HepG2 (cell line): ENCODE measurements at regions of chr18 and their contacts with region 1.

Region 1: DNA sequence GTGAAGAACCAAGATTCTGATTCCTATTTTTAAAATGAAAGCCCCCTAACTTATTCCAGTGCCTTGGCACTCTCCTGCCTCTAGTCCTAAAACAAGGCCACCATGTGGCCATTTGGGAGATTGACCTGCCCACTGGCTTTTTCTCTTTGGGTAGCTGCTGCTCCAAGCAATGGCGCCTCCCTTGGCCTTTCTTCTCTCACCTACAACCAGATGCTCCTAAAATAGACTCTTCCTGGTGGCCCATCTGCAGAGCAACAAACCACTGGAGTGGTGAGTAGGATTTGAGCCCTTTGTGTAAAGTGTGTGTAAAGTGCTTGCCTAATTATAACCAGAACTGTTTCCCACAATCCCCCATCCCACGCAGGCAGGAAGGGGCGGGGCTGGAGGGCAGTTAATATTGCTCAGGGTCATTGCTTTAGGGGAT is 114.2 kb downstream of the FHOD3 start:
- DNase-seq: peak; percentile 21
- ATAC-seq: peak; percentile 77
- H3K4me3 ChIP-seq: no peak overlapping the region
- H3K27ac ChIP-seq: no peak overlapping the region
- H3K4me1 ChIP-seq: no peaks in the 10 kb centered on the region
- H3K27me3 ChIP-seq: no peaks in the 10 kb centered on the region
- CTCF ChIP-seq: peak; percentile 27
- EP300 ChIP-seq: no peak
- POLR2A ChIP-seq: no peak
- RAD21 ChIP-seq: no peak

Region 2: DNA sequence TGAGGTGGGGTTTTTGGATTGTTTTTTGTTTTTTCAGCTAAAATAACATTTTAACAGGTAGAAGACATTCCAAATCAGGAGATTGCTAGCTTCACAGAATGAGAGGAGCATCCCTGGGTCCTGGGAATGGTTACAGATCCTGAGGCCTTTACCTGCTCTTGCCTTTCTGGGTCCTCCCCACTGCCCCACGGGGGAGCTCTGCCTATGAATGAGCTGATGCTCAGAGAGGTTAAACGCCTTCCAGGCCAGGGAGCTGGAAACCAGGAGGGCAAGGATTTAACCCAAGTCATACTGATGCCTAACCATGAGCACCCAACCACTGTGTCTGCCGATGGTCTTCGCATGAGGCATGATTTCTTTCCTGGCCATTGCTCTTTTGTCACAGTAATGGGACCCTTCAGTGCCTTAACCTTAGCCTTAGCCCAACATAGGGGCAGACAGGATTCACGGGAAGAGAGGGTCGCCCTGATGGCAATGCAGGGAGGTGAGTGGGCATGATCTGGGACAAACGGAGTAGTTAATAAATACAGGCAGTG is 208.3 kb before region 1 on chr18:
- CTCF ChIA-PET with region 1: no interaction called
- POLR2A ChIA-PET with region 1: no interaction called
- in situ Hi-C with region 1: no loop called
- intact Hi-C with region 1: no loop called
- DNase-seq: no peak
- ATAC-seq: no peak
- H3K4me3 ChIP-seq: no peak overlapping the region
- H3K27ac ChIP-seq: no peak overlapping the region
- H3K4me1 ChIP-seq: peaks cover 6% of the 10 kb centered on the region; the same call in 1 of the 2 replicates
- H3K27me3 ChIP-seq: no peaks in the 10 kb centered on the region
- CTCF ChIP-seq: no peak
- EP300 ChIP-seq: no peak
- POLR2A ChIP-seq: no peak
- RAD21 ChIP-seq: no peak

Region 3: DNA sequence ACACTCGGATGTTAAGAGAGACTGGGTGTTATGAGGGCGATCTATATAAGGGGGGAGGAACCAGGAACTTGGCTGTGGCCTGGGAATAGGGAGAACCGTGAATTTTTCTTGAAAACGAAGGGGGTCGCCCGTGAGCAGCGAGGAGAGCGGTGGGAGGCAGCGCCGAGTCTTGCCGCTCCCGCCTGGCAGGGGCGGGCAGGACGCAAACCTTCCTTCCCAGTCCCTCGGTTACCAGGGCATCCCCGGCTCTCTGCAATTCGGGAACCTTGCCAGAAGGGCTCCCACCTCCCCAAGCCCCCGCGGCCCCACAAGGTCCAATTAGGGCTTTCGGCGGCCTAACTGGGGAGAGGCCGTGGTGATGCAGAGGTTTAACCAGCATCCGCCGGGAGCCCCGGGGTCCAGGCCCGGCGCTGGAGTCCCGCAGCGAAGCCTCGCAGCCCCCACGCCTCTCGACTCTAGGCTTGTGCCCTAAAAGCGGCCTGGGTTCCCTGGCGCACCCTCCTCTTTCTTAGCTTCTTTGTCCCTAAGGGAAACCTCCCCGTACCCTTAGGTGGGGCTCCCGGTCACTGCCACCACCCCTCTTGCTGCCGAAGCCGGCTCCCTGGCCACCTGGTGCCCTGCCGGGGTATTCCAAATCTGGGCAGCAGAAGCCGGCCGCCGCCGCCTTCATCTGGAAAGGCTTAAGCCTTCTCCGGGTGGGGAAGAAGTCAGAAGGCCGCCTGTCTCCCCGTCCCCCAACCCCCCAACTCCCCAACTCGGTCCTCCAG is 114.9 kb before region 1 on chr18:
- CTCF ChIA-PET with region 1: no interaction called
- POLR2A ChIA-PET with region 1: no interaction called
- in situ Hi-C with region 1: no loop called
- intact Hi-C with region 1: loop called (anchors 2 kb)
- DNase-seq: peak; percentile 32
- ATAC-seq: peak; percentile 86
- H3K4me3 ChIP-seq: peak overlapping the region; percentile 47 to 67 (median 52); a peak in 5 of 6 replicates
- H3K27ac ChIP-seq: no peak overlapping the region
- H3K4me1 ChIP-seq: peaks cover 9% of the 10 kb centered on the region; the same call in 1 of the 2 replicates
- H3K27me3 ChIP-seq: peaks cover 0 to 50% of the 10 kb centered on the region in 2 experiments; a peak in 4 of 5 replicates
- CTCF ChIP-seq: peak; percentile 76
- EP300 ChIP-seq: no peak
- POLR2A ChIP-seq: no peak
- RAD21 ChIP-seq: no peak

Region 4: DNA sequence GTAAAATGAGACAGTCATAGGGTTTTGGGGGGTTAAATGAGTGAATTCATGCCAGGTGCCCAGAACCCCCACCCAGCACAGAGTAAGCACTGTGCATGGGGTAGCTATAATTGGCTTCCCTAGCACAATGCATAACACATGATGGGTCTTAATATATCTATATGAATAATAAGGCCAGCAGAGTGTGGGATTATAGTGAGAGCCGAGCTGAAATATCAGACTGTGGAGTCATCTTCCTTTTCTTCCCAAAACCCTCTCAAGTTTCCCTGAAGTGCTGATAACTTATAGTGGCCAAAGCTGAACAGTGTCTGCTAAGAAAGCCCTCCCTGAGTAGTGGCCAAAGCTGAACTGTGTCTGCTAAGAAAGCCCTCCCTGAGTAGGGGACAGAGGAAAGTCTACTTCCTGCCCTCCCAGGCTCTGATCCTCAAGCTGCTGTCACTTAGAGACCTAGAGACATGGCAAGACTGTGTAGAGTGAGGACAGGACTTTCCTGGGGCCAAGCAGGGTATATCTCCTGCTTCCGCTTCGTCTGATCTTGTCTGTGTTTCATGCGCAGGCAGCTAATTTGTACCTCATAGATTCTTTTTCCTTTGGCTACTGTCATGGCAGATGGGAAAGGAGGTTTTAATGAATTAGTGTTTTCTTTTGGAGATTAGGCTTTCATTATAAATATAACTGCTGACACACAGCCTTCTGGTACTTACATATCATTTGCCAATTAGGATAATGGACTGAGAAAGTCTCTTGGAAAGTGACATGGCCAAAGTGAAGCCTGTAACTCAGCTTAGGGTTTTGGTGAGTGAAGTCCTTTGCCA is 19.4 kb before region 1 on chr18:
- CTCF ChIA-PET with region 1: no interaction called
- POLR2A ChIA-PET with region 1: no interaction called
- in situ Hi-C with region 1: no loop called
- intact Hi-C with region 1: no loop called
- DNase-seq: no peak
- ATAC-seq: no peak
- H3K4me3 ChIP-seq: no peak overlapping the region
- H3K27ac ChIP-seq: no peak overlapping the region
- H3K4me1 ChIP-seq: no peaks in the 10 kb centered on the region
- H3K27me3 ChIP-seq: no peaks in the 10 kb centered on the region
- CTCF ChIP-seq: no peak
- EP300 ChIP-seq: no peak
- POLR2A ChIP-seq: no peak
- RAD21 ChIP-seq: no peak